Activated CD4-positive, alpha-beta T cell treated with anti-CD3 and anti-CD28 coated beads for 36 hours (primary cell): ENCODE measurements at regions of chr16 and their contacts with region 1.

Region 1: GRCh38 chr16:4616047-4616811 is 1.5 kb upstream of the UBALD1 start:
- DNase-seq: peak; percentile 100
- ATAC-seq: peak; percentile 89
- H3K4me3 Mint-ChIP-seq: peak overlapping the region; percentile 86
- H3K27ac Mint-ChIP-seq: peak overlapping the region; percentile 95
- H3K4me1 Mint-ChIP-seq: peaks cover 17% of the 10 kb centered on the region
- H3K27me3 Mint-ChIP-seq: no peaks in the 10 kb centered on the region

Region 2: GRCh38 chr16:4183237-4184036 is 432.8 kb before region 1 on chr16:
- CTCF ChIA-PET with region 1: no interaction called
- POLR2A ChIA-PET with region 1: no interaction called
- intact Hi-C with region 1: loop called in 1 of 2 experiments (anchors 1 kb)
- DNase-seq: peak; percentile 94
- ATAC-seq: peak; percentile 95
- H3K4me3 Mint-ChIP-seq: peak overlapping the region; percentile 76
- H3K27ac Mint-ChIP-seq: peak overlapping the region; percentile 47
- H3K4me1 Mint-ChIP-seq: peaks cover 6% of the 10 kb centered on the region
- H3K27me3 Mint-ChIP-seq: no peaks in the 10 kb centered on the region

Region 3: DNA sequence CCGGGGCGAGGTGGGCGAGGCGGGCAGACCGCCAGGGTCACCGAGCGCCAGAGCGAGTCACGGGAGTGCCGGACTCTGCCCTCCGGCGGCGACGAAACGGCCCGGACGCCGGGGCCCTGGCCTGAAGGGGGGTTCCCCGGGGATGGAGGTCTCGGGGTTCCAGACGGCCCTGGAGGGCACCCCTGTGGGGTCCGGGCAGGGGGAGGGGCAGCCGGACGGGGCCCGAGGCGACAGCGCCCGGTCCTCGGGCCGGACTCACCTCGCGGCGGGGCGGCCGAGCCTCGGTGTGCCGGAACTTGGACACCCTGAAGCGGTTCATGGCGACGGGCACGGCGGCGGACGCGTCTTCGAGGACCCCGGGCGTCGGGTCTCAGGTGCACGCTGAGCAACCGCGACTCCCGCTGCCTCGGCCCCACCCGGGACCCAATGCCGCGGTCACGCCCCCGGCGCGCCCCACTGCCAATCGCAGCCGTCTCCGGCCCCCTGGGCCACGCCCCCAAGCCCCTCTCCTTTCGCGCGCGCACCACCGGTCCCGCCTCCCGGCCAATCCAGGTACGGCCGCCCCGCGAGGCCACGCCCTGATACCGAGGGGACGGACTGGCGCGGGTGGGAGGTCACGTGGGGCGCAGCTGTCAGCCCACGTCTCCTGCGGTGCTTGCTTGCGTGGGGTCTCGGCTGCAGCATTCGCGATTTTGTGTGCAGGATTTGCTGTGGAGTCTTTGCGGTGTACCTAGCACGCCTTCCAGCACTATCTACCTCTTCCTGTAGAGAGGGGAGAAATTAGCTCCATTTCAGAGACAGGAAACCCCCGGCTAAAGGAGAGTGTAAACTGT is 199.8 kb before region 1 on chr16 and contains the start of gene CORO7:
- CTCF ChIA-PET with region 1: no interaction called
- POLR2A ChIA-PET with region 1: interaction called, 3 read pairs
- intact Hi-C with region 1: loop called in 1 of 2 experiments (anchors 1 kb)
- DNase-seq: peak; percentile 98
- ATAC-seq: peak; percentile 81
- H3K4me3 Mint-ChIP-seq: peak within 1 kb of the TSS; percentile 86
- H3K27ac Mint-ChIP-seq: peak within 1 kb of the TSS; percentile 84
- H3K4me1 Mint-ChIP-seq: peaks cover 29% of the 10 kb centered on the region
- H3K27me3 Mint-ChIP-seq: no peaks in the 10 kb centered on the region
- total RNA-seq, gene CORO7: 65.0 to 67.1 TPM

Region 4: DNA sequence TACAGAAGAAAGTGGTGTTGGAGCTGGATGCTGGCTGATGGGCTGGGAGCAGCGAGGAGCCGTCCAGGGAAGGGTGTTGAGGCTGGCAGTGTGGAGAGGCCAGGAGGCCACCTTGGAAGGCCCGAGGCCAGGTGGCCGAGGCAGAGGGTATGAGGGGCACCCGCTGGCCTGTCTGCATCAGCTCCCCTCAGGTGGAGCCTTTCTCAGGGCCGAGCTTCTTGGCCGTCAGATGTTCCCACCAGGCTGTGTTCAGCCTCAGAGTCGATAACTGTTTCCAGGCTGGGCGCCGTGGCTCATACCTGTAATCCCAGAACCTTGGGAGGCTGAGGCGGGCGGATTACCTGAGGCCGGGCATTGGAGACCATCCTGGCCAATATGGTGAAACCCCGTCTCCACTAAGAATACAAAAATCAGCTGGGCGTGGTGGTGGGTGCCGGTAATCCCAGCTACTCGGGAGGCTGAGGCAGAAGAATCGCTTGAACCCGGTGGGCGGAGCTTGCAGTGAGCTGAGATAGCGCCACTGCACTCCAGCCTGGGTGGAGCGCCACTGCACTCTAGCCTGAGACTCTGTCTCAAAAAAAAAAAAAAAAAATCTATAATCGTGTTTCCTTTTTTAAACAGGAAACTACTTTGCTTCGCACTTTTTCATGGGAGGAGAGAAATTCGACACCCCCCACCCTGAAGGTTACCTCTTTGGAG is 33.7 kb after region 1 on chr16:
- CTCF ChIA-PET with region 1: interaction called, 15 read pairs
- POLR2A ChIA-PET with region 1: no interaction called
- intact Hi-C with region 1: no loop called
- DNase-seq: peak; percentile 53
- ATAC-seq: peak; percentile 54
- H3K4me3 Mint-ChIP-seq: no peak overlapping the region
- H3K27ac Mint-ChIP-seq: peak overlapping the region; percentile 37
- H3K4me1 Mint-ChIP-seq: peaks cover 31% of the 10 kb centered on the region
- H3K27me3 Mint-ChIP-seq: no peaks in the 10 kb centered on the region

Region 5: DNA sequence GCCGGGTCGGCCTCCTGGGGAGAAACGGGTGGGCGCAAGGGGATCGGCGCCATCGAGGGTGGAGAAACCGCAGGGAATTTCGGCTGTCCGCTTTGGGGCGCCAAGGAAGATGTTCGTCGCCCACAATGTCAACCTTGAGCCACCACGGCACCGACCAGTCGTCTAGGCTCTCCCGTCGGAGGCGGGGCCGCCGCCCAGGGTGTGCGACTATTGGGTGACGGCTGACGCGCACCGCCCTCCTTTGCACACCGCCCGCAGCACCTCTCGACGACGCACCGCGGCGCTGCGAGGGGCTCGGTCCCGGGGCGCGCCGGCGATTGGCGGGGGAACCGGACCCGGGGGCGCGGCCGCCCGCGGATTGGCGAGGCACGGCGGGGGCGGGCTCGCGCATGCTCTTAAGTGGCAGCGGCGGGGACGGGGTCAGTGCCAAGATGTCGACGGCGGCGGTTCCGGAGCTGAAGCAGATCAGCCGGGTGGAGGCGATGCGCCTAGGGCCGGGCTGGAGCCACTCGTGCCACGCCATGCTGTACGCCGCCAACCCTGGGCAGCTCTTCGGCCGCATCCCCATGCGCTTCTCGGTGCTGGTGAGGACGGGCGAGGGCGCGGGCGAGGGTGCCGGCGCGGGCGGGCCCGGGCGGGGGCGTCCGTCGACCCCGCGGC is 77.2 kb after region 1 on chr16 and contains the start of gene NUDT16L1:
- CTCF ChIA-PET with region 1: no interaction called
- POLR2A ChIA-PET with region 1: no interaction called
- intact Hi-C with region 1: loop called (anchors 1 kb)
- DNase-seq: peak; percentile 98
- ATAC-seq: peak; percentile 95
- H3K4me3 Mint-ChIP-seq: peak within 1 kb of the TSS; percentile 77
- H3K27ac Mint-ChIP-seq: peak within 1 kb of the TSS; percentile 83
- H3K4me1 Mint-ChIP-seq: peaks cover 17% of the 10 kb centered on the region
- H3K27me3 Mint-ChIP-seq: no peaks in the 10 kb centered on the region
- total RNA-seq, gene NUDT16L1: 16.4 to 22.5 TPM

Region 6: DNA sequence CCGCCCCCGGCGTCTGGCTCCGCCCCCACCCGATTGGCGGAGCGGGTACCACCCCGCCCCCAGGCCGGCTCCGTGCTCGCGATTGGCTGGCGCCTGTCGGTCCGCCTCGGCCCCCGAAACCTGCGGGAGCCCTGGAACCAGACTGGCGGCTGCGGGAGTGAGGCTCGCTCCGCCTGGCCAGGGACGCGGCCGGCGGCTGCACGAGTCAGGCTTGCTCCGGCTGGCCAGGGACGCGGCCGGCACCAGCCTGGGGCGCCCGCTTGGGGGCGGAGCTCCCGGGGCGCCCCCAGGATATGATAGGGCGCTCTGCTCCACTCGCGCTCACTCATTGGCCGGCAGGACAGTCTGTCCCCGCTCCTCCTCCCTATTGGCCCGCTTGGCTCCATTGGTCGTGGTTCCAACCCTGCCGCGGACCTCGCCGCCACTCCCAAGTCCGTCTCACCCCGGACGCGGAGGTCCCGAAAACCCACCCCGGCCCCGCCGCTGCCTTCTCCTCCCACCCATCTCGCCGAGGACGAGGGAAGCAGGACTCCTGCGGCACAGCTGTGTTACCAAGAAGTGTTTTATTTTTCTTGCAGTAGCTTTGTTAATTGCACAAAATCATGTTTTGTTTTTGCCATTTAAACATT is 186.5 kb after region 1 on chr16:
- CTCF ChIA-PET with region 1: no interaction called
- POLR2A ChIA-PET with region 1: no interaction called
- intact Hi-C with region 1: loop called in 1 of 2 experiments (anchors 2 kb)
- DNase-seq: peak; percentile 92
- ATAC-seq: peak; percentile 98
- H3K4me3 Mint-ChIP-seq: peak overlapping the region; percentile 74
- H3K27ac Mint-ChIP-seq: peak overlapping the region; percentile 58
- H3K4me1 Mint-ChIP-seq: peaks cover 14% of the 10 kb centered on the region
- H3K27me3 Mint-ChIP-seq: no peaks in the 10 kb centered on the region